Activated CD4-positive, alpha-beta memory T cell treated with anti-CD3 and anti-CD28 coated beads for 36 hours (primary cell): ENCODE measurements at regions of chr1 and their contacts with region 1.

Region 1: DNA sequence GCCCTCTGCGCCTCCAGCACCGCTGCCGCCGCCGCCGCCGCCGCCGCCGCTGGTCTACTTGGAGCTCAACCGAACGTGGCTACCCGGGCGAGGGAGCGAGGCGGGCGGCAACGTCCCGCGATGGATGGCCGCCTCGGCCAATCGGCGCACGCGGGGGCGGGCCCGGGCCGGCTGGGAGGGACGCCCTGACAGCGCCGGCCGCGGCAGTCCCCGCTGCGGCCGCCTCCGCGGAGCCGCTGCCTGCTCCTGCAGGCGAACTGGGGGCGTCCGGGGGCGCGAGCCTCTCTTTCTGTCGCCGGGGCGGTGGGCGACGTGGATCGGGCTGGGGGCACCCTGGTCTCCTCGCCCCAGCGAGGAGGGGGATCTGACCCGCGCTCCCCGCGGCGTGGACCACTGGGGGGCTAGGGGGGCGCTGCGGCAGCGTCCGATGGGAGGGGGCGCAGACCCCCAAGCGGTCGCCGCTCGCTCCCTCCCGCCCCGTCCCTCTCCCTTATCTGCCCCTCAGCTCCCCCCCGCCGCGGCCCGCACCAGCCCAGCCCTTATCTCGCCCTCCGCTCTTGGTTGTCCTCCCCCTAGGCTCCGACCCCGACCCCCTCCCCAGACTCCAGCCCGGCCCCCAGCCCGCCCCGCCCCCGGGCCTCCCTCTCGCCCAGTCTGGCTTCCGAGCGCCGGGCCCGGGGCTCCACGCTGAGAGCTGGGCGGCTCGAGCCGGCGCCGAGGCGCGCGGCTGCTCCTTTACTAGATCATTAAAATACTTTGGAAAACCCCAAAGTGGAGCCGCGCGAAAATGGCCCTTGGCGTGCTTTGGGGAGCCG is at the start of gene SSBP3:
- DNase-seq: peak; percentile 93
- H3K4me3 Mint-ChIP-seq: peak within 1 kb of the TSS; percentile 84
- H3K27ac Mint-ChIP-seq: peak within 1 kb of the TSS; percentile 92
- H3K4me1 Mint-ChIP-seq: peaks cover 63% of the 10 kb centered on the region
- H3K27me3 Mint-ChIP-seq: no peaks in the 10 kb centered on the region
- total RNA-seq, gene SSBP3: 44.4 to 49.6 TPM

Region 2: GRCh38 chr1:54199765-54200518 is 206.6 kb before region 1 on chr1 and contains the starts of genes CYB5RL and MRPL37:
- CTCF ChIA-PET with region 1: interaction called, 6 read pairs
- POLR2A ChIA-PET with region 1: interaction called, 3 read pairs
- intact Hi-C with region 1: loop called (anchors 2 kb)
- DNase-seq: peak; percentile 94
- H3K4me3 Mint-ChIP-seq: peak within 1 kb of the TSS; percentile 90
- H3K27ac Mint-ChIP-seq: peak within 1 kb of the TSS; percentile 75
- H3K4me1 Mint-ChIP-seq: peaks cover 29% of the 10 kb centered on the region
- H3K27me3 Mint-ChIP-seq: no peaks in the 10 kb centered on the region
- total RNA-seq, gene CYB5RL: 12.8 to 13.0 TPM
- total RNA-seq, gene MRPL37: 157 to 166 TPM

Region 3: GRCh38 chr1:54287176-54287650 is 119.3 kb before region 1 on chr1:
- CTCF ChIA-PET with region 1: no interaction called
- POLR2A ChIA-PET with region 1: interaction called, 3 read pairs
- intact Hi-C with region 1: loop called (anchors 2 kb)
- DNase-seq: peak; percentile 87
- H3K4me3 Mint-ChIP-seq: peak overlapping the region; percentile 3
- H3K27ac Mint-ChIP-seq: peak overlapping the region; percentile 85
- H3K4me1 Mint-ChIP-seq: peaks cover 81% of the 10 kb centered on the region
- H3K27me3 Mint-ChIP-seq: no peaks in the 10 kb centered on the region

Region 4: DNA sequence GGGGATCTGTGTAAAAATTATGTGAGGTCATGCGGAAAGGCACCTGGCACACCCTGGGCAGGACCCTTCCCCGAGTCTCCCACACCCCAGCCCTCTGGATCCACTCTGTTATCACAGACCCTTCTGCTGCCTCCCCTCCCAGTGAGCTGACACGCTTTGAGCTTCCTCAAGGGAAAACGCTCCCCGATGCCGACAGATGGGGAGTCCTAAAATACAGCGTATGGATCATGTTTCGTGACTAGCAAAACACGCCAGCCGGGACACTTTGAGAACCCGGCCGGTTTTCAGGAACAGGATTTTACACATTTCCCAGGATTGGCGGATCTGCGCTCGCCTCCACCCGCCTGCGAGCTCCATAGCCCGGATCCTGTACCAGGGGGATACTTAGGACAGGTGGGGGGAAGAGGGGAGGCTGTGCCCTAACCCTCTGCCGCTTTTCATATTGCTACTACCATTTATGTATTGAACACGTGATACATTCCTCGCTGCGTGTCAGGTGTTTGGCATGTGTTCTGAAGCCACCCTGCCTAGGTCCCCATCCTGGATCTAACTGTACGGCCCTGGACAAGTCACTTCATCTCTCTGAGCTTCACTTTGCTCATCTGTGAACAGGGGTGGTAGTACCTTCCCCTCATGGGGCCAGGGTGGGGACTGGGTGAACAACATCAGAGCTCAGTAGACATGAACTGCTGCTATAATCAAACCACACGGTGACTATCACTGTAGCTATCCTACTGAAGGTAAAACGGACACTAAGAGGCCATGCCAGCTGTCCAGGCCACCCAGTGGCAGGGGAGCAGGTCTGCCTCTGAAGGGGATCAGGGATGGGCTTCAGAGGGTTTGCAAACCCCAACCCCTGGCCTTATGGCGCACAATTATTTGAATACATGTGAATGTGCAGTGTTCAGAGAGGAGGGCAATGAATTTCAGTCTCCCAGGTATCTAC is 63.5 kb before region 1 on chr1:
- CTCF ChIA-PET with region 1: no interaction called
- POLR2A ChIA-PET with region 1: no interaction called
- intact Hi-C with region 1: no loop called
- DNase-seq: no peak
- H3K4me3 Mint-ChIP-seq: no peak overlapping the region
- H3K27ac Mint-ChIP-seq: no peak overlapping the region
- H3K4me1 Mint-ChIP-seq: peaks cover 18% of the 10 kb centered on the region
- H3K27me3 Mint-ChIP-seq: no peaks in the 10 kb centered on the region

Region 5: GRCh38 chr1:54361342-54361741 is 45.2 kb before region 1 on chr1:
- CTCF ChIA-PET with region 1: interaction called, 3 read pairs
- POLR2A ChIA-PET with region 1: interaction called, 10 read pairs
- intact Hi-C with region 1: loop called (anchors 2 kb)
- DNase-seq: no peak
- H3K4me3 Mint-ChIP-seq: no peak overlapping the region
- H3K27ac Mint-ChIP-seq: no peak overlapping the region
- H3K4me1 Mint-ChIP-seq: peaks cover 62% of the 10 kb centered on the region
- H3K27me3 Mint-ChIP-seq: no peaks in the 10 kb centered on the region